ENCODE measurements at regions of chr19 and their contacts with region 1.

Region 1: DNA sequence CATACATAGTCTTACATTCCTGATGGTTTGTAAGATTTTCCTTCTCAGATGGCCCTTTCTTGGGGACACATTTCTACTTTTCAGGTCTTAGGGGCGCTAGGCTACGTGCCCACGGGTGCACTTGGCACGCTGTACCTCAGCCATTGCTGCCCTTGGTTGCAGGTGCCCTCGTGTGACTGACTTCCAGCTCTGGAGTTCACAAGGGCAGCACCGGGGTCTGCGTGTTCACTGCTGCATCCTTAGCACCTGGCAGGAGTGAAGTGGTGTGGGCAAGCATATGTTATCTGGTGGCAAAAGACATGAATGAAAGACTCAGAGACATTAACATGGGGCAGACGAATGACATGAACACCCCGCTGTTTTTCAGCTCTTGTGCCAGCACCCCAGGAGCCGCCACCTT is 13.3 kb upstream of the WDR88 start:
- DNase-seq: no peak
- ATAC-seq: peak; percentile 45 to 52; a peak in 5 of 6 replicates
- H3K4me3 ChIP-seq: no peak overlapping the region
- H3K27ac ChIP-seq: peak overlapping the region; percentile 1 to 27; a peak in 3 of 6 replicates
- H3K4me1 ChIP-seq: 0 out of 3 replicates have a peak, but pooled peaks cover 3% of the 10 kb centered on the region
- CTCF ChIP-seq: no peak
- EP300 ChIP-seq: no peak
- POLR2A ChIP-seq: no peak
- RAD21 ChIP-seq: no peak

Region 2: GRCh38 chr19:32895384-32895783 is 223.3 kb before region 1 on chr19:
- CTCF ChIA-PET with region 1: no interaction called
- POLR2A ChIA-PET with region 1: no interaction called
- DNase-seq: no peak
- ATAC-seq: no peak
- H3K4me3 ChIP-seq: no peak overlapping the region
- H3K27ac ChIP-seq: no peak overlapping the region
- H3K4me1 ChIP-seq: no peaks in the 10 kb centered on the region
- CTCF ChIP-seq: no peak
- EP300 ChIP-seq: no peak
- POLR2A ChIP-seq: no peak
- RAD21 ChIP-seq: no peak

Region 3: DNA sequence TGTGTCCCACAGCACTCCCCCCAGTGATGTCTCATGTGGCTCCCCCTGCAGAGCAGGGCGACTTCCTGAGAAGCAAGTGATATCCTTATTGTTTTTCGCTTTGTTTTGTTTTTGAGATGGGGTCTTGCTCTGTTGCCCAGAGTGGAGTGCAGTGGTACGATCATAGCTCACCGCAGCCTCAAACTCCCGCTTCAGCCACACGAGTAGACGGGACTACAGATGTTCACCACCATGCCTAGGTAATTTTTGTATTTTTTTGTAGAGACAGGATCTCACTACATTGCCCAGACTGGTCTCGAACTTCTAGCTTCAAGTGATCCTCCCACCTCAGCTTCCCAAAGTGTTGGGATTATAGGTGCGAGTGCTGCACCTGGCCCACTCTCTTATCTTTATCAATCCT is 151.9 kb before region 1 on chr19:
- CTCF ChIA-PET with region 1: interaction called, 349 read pairs
- POLR2A ChIA-PET with region 1: no interaction called
- DNase-seq: no peak
- ATAC-seq: no peak
- H3K4me3 ChIP-seq: no peak overlapping the region
- H3K27ac ChIP-seq: no peak overlapping the region
- H3K4me1 ChIP-seq: peaks cover 12% of the 10 kb centered on the region; the same call in 2 of the 3 replicates
- CTCF ChIP-seq: no peak
- EP300 ChIP-seq: no peak
- POLR2A ChIP-seq: no peak
- RAD21 ChIP-seq: no peak

Region 4: DNA sequence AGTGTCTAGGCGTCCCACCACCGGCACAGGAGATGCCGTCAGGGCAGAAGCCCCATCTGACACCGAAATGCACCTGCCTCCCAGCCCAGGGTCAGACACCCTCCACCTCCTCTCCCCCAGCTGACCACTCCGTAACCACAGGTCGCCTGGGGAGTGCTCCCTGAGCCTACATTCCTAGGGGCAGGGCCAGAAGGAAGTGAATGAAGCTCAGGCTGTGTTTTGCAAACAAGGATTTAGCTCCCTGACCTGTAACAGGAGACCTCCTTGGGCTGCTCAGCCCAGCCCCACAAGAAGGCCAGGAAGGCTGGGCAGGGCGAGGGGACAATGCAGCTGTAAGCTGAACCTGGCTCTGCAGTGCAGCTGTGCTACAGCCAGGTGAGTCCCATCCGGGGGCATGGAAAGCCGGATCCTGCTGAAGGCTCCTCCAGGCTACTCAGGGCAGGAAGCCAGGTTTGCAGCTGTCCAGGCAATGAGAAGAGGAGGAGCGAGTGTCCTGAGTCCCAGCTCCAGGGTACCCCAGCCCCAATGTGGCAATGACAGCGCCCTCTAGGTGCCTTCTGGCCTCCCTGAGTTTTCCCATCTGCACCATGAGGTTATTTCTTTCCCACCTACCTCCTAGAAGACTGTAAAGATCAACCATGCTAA is 96.0 kb before region 1 on chr19:
- CTCF ChIA-PET with region 1: interaction called, 14 read pairs
- POLR2A ChIA-PET with region 1: no interaction called
- DNase-seq: no peak
- ATAC-seq: peak; percentile 30 to 41; a peak in 4 of 6 replicates
- H3K4me3 ChIP-seq: no peak overlapping the region
- H3K27ac ChIP-seq: 0 out of 6 replicates have a peak overlapping the region, but pooled peaks of 1 of the 2 experiments have one; percentile 6
- H3K4me1 ChIP-seq: peaks cover 31% of the 10 kb centered on the region
- CTCF ChIP-seq: peak; percentile 39
- EP300 ChIP-seq: no peak
- POLR2A ChIP-seq: no peak
- RAD21 ChIP-seq: no peak

Region 5: GRCh38 chr19:33047406-33047805 is 71.2 kb before region 1 on chr19:
- CTCF ChIA-PET with region 1: interaction called, 20 read pairs
- POLR2A ChIA-PET with region 1: no interaction called
- DNase-seq: peak in 1 of 2 experiments; percentile 65
- ATAC-seq: no peak
- H3K4me3 ChIP-seq: no peak overlapping the region
- H3K27ac ChIP-seq: peak overlapping the region in 1 of 2 experiments; percentile 54; a peak in 3 of 6 replicates
- H3K4me1 ChIP-seq: peaks cover 58% of the 10 kb centered on the region
- CTCF ChIP-seq: no peak
- EP300 ChIP-seq: no peak
- POLR2A ChIP-seq: no peak
- RAD21 ChIP-seq: no peak

Region 6: GRCh38 chr19:33080761-33081681 is 37.6 kb before region 1 on chr19 and contains the start of gene GPATCH1:
- CTCF ChIA-PET with region 1: interaction called, 39 read pairs
- POLR2A ChIA-PET with region 1: no interaction called
- DNase-seq: peak; percentile 96 to 99
- ATAC-seq: peak; percentile 90
- H3K4me3 ChIP-seq: peak within 1 kb of the TSS; percentile 76
- H3K27ac ChIP-seq: peak within 1 kb of the TSS; percentile 88 to 92
- H3K4me1 ChIP-seq: peaks cover 38% of the 10 kb centered on the region
- CTCF ChIP-seq: no peak
- EP300 ChIP-seq: no peak; a peak in 1 of 5 replicates
- POLR2A ChIP-seq: peak; percentile 79
- RAD21 ChIP-seq: peak; percentile 33 to 54; a peak in 4 of 5 replicates
- polyA plus RNA-seq, gene GPATCH1: 19.0 and 24.2 TPM in 2 replicates

Region 7: DNA sequence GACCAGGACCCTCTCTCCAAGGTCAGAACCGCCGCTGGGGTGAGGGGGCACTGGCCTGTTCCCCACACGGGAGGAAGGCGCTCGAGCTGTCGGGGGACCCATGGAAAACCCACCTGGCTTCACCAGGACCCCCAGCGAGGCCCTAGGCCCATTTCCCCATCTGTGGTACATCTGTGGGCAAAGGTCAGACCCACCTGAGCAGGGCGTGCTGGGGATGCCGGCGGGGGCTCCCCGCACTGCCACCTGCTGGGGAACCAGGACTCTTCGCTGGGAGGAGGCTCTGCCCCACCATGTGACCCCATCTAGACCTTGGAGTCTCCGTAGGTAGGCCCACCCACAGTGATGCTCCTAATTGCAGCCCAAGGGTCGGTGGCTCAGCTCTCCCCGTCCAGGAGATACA is 13.8 kb after region 1 on chr19:
- CTCF ChIA-PET with region 1: interaction called, 87 read pairs
- POLR2A ChIA-PET with region 1: no interaction called
- DNase-seq: peak; percentile 42 to 70
- ATAC-seq: peak; percentile 74 to 84; a peak in 5 of 6 replicates
- H3K4me3 ChIP-seq: no peak overlapping the region
- H3K27ac ChIP-seq: no peak overlapping the region
- H3K4me1 ChIP-seq: peaks cover 9% of the 10 kb centered on the region; the same call in 2 of the 3 replicates
- CTCF ChIP-seq: peak; percentile 44; the same call in 2 of the 3 replicates
- EP300 ChIP-seq: no peak
- POLR2A ChIP-seq: no peak
- RAD21 ChIP-seq: no peak

Region 8: GRCh38 chr19:33241530-33242101 is 123.0 kb after region 1 on chr19:
- CTCF ChIA-PET with region 1: no interaction called
- POLR2A ChIA-PET with region 1: no interaction called
- DNase-seq: peak in 1 of 2 experiments; percentile 45
- ATAC-seq: peak; percentile 22 to 73; a peak in 4 of 6 replicates
- H3K4me3 ChIP-seq: no peak overlapping the region
- H3K27ac ChIP-seq: peak overlapping the region in 1 of 2 experiments; percentile 46; a peak in 3 of 6 replicates
- H3K4me1 ChIP-seq: 0 out of 3 replicates have a peak, but pooled peaks cover 3% of the 10 kb centered on the region
- CTCF ChIP-seq: peak; percentile 98
- EP300 ChIP-seq: no peak
- POLR2A ChIP-seq: no peak
- RAD21 ChIP-seq: peak; percentile 97 to 100

Measured in A549 (cell line).